A673 (cell line): ENCODE measurements at regions of chr1 and their contacts with region 1.

Region 1: DNA sequence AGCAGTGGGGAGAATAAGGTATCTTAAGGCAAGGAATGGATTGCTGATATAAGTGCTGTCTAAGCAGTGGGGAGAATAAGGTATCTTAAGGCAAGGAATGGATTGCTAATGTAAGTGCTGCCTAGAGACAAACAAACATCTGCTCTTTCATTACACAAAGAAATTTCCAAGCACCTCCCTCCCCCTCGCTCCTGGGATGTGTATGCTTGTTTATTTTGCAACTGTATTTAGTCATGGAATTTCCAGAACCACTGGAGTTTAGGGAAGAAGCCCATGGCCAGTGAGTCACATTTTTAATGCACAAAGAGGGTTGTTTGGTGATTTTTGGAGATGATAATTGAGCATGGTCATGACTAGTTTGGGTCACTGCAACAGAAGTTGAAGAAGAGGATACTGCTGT is 21.5 kb downstream of the PDPN start:
- DNase-seq: no peak
- H3K4me3 ChIP-seq: no peak overlapping the region
- H3K27ac ChIP-seq: no peak overlapping the region
- H3K4me1 ChIP-seq: no peaks in the 10 kb centered on the region
- H3K27me3 ChIP-seq: no peaks in the 10 kb centered on the region
- CTCF ChIP-seq: no peak

Region 2: DNA sequence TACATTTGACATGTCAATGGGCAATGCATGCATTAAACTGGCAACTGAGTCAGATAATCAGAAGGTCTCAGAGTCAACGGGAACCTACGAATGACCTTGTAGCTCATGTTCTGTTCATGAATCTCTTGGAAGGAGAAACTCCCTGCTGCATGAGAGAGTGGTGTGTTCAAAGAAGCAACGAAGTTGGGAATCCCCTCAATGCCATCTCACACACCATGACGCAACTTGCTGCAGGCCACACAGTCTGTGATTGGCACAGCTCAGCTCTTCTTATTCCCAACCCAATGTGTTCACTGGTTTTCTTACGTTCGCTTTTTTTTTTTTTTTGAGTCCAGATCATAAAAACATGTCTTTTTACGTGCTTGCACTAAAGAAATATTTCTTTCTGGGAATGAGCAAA is 41.4 kb after region 1 on chr1:
- CTCF ChIA-PET with region 1: no interaction called
- POLR2A ChIA-PET with region 1: interaction called, 11 read pairs
- intact Hi-C with region 1: no loop called
- DNase-seq: no peak
- H3K4me3 ChIP-seq: no peak overlapping the region
- H3K27ac ChIP-seq: no peak overlapping the region
- H3K4me1 ChIP-seq: no peaks in the 10 kb centered on the region
- H3K27me3 ChIP-seq: no peaks in the 10 kb centered on the region
- CTCF ChIP-seq: no peak

Region 3: GRCh38 chr1:13781907-13782644 is 176.9 kb after region 1 on chr1:
- CTCF ChIA-PET with region 1: no interaction called
- POLR2A ChIA-PET with region 1: no interaction called
- intact Hi-C with region 1: no loop called
- DNase-seq: no peak
- H3K4me3 ChIP-seq: no peak overlapping the region
- H3K27ac ChIP-seq: no peak overlapping the region
- H3K4me1 ChIP-seq: no peaks in the 10 kb centered on the region
- H3K27me3 ChIP-seq: no peaks in the 10 kb centered on the region
- CTCF ChIP-seq: no peak

Region 4: GRCh38 chr1:13792419-13792818 is 187.3 kb after region 1 on chr1:
- CTCF ChIA-PET with region 1: no interaction called
- POLR2A ChIA-PET with region 1: no interaction called
- intact Hi-C with region 1: no loop called
- DNase-seq: no peak
- H3K4me3 ChIP-seq: no peak overlapping the region
- H3K27ac ChIP-seq: no peak overlapping the region
- H3K4me1 ChIP-seq: peaks cover 8% of the 10 kb centered on the region
- H3K27me3 ChIP-seq: no peaks in the 10 kb centered on the region
- CTCF ChIP-seq: no peak

Region 5: DNA sequence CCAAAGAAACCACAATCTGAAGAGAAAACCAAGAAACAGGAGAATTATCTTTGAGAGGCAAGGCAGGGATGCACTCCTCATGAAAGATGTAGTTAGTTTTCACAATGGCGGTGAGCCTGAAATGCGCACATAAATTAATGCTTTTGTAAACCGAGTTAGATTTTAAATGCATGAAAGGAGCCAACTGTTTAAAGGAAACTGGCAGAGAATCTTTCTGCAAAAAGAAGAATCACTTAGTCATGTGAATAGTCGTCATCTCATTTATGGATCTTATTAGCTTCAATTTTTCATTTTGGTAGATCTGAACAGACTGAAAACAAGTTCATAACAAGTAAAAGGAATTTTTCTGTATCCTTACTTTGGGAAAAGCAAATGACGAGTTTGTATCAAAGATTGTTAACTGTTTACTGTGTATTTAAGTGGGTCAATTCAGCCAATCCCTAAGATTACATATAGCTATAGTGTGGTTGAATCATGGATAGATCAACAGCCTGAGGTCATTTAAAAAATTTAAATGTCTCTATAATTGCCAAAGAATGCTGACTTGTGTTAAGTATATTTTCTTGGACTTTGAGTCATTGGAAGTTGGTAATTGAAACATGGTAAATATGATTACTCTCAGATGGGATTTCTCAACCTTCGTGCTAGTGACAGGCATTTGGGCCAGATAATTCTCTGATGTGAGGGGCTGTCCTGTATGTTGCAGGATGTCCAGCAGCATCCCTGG is 766.8 kb after region 1 on chr1:
- CTCF ChIA-PET with region 1: no interaction called
- POLR2A ChIA-PET with region 1: no interaction called
- intact Hi-C with region 1: no loop called
- DNase-seq: no peak
- H3K4me3 ChIP-seq: no peak overlapping the region
- H3K27ac ChIP-seq: no peak overlapping the region
- H3K4me1 ChIP-seq: no peaks in the 10 kb centered on the region
- H3K27me3 ChIP-seq: no peaks in the 10 kb centered on the region
- CTCF ChIP-seq: no peak